ENCODE measurements at regions of chr20 and their contacts with region 1.

Region 1: DNA sequence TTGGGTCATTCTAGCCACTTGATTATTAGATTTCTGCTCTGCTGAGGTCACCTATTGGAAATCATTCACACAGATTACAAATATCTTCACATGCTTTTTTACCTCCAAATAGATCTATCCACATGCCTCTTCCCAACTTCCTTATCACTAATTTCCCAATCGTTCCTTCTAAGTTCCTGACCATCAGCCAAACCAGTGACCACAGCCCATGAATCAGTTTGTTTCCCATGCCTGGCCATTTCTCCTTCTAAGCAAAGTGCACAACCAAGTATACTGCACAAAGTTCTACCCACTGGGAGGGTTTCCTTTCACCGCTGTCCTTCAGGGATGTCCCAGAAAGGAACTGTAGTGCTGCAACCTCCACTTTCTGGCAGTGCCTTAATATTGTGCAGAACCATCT is 140.5 kb upstream of the SYNDIG1 start:
- DNase-seq: no peak
- ATAC-seq: no peak
- H3K4me3 ChIP-seq: no peak overlapping the region
- H3K4me3 Mint-ChIP-seq: no peak overlapping the region
- H3K27ac ChIP-seq: no peak overlapping the region
- H3K27ac Mint-ChIP-seq: no peak overlapping the region
- H3K4me1 ChIP-seq: no peaks in the 10 kb centered on the region
- H3K4me1 Mint-ChIP-seq: peaks cover 0 to 10% of the 10 kb centered on the region in 2 donors
- H3K27me3 ChIP-seq: no peaks in the 10 kb centered on the region
- H3K27me3 Mint-ChIP-seq: no peaks in the 10 kb centered on the region
- CTCF ChIP-seq: no peak

Region 2: DNA sequence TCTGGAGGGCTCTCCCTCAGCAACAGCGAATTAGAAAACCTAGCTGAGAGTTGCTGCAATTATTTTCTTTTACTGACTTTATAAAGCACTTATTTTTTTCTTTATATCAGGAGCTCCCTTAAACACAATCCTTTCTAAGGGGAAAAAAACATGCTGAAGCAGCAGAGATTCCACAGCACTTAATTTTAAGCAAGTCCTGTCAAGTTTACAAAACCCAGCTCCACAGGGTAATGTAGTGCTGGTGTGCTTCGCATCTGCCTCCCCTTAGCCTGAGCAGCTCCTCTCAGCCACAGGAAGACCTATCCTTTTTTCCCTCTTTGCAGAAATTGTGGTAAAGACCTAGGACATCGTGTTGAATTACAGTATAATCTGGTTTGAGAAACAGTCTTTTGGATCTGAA is 67.5 kb before region 1 on chr20:
- intact Hi-C with region 1: loop called (anchors 10 kb)
- DNase-seq: no peak
- ATAC-seq: no peak
- H3K4me3 ChIP-seq: no peak overlapping the region
- H3K4me3 Mint-ChIP-seq: no peak overlapping the region
- H3K27ac ChIP-seq: no peak overlapping the region
- H3K27ac Mint-ChIP-seq: no peak overlapping the region
- H3K4me1 ChIP-seq: no peaks in the 10 kb centered on the region
- H3K4me1 Mint-ChIP-seq: no peaks in the 10 kb centered on the region
- H3K27me3 ChIP-seq: no peaks in the 10 kb centered on the region
- H3K27me3 Mint-ChIP-seq: peaks cover 10 to 35% of the 10 kb centered on the region in 2 donors
- CTCF ChIP-seq: no peak

Region 3: DNA sequence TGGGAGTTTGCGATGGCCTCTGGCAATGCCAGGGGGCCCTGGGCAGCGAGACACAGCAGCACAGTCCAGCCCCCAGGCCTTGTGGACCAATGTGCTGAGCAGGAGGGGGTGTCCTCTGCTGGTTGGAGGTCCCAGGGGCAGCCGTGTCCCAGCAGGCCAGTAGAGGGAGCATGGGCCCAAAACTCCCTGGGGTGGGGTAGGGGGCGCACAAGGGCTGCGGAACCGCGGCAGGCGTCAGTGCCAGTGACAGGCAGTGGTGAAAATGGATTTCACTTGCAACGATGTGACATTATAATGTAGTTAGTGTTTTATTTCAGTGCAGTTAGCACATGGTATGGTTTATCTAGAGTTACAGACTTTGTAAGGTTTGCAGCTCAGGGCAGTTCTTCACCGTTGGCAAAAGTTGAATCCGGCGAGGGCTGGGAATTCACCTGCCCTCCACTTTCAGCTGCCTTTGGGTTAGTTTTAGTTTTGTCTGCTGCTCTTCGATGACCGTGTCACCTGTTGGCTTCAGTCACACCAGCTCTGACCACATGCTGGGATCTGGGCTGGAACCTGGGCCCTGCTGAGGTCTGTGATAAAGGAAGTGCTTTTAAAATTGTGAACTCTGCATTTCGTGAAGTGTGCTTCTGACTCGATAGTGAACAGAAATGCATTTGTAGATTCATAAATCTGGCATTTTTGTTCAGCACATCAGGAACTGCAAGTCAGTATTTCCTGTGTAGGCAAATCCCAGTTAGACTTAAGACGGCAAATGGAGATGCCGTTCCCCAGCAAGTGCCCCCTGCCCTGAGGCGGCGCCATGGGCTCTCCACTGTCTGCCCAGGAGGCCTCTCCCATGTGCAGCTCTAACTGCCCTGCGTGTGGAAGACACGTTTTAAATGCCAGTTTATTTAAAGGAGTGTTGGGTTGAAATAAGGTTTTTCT is 965.8 kb after region 1 on chr20:
- intact Hi-C with region 1: no loop called
- DNase-seq: peak; percentile 34 to 77
- ATAC-seq: peak; percentile 72 to 91 (median 86)
- H3K4me3 ChIP-seq: no peak overlapping the region
- H3K4me3 Mint-ChIP-seq: no peak overlapping the region
- H3K27ac ChIP-seq: no peak overlapping the region
- H3K27ac Mint-ChIP-seq: peak overlapping the region; percentile 38
- H3K4me1 ChIP-seq: peaks cover 4% of the 10 kb centered on the region
- H3K4me1 Mint-ChIP-seq: no peaks in the 10 kb centered on the region
- H3K27me3 ChIP-seq: no peaks in the 10 kb centered on the region
- H3K27me3 Mint-ChIP-seq: no peaks in the 10 kb centered on the region
- CTCF ChIP-seq: peak; percentile 56